Activated T-helper 1 cell treated with anti-CD3 and anti-CD28 coated beads, Interleukin-12 subunit alpha, Interleukin-12 subunit beta, Interleukin-2, Interleukin-4 antibody, amounts not matched to agents 30 ng/mL and 10 ng/mL and 1 ng/mL, durations not matched to agents 14 hours and 24 hours and 36 hours (primary cell): ENCODE measurements at regions of chr18 and their contacts with region 1.

Region 1: DNA sequence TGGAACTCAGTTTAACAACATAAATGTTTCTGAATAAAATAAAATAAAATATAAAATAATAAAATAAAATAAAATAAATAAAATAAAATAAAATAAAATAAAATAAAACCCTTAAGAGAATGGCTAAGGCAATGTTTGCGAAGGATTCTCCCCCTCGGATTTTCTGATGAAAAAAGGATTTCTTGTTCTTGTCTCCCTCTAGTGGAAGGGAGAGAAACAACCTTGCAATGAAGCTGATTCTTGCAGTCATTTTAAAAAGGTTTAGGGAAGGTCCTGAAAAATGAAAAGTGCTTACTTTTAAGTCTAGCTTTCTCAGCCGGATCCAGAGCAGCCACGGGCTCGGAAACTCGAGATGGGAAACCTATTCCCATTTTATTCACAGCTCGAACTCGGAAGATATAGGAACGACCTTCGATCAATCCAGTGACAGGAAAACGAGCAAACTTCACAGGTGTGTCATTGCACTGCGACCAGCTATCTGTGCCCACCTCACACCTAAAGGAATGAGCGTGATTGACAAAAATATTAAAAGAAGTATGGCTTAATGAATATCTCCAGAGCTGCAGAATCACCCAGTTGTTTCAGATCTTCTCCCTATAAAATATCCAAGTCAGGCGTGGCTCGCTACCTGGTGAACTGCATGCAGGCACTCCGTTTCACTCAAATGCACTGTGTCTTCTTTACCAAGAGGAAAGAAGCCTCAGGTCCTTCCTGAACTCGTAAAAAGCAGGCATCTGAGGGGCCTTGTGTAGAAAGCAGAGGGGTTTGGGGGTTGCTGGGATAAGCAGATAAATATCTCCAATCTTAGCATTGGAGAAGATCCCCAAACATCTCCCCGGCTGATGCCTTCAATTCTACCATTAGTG is 68.1 kb downstream of the MYOM1 start:
- DNase-seq: no peak
- H3K4me3 Mint-ChIP-seq: no peak overlapping the region
- H3K27ac Mint-ChIP-seq: no peak overlapping the region
- H3K4me1 Mint-ChIP-seq: peaks cover 7% of the 10 kb centered on the region
- H3K27me3 Mint-ChIP-seq: peaks cover 7% of the 10 kb centered on the region

Region 2: GRCh38 chr18:2932247-2933181 is 219.1 kb before region 1 on chr18:
- intact Hi-C with region 1: loop called (anchors 1 kb)
- DNase-seq: peak; percentile 29
- H3K4me3 Mint-ChIP-seq: no peak overlapping the region
- H3K27ac Mint-ChIP-seq: peak overlapping the region; percentile 82
- H3K4me1 Mint-ChIP-seq: peaks cover 38% of the 10 kb centered on the region
- H3K27me3 Mint-ChIP-seq: no peaks in the 10 kb centered on the region

Region 3: GRCh38 chr18:2994603-2995432 is 156.8 kb before region 1 on chr18:
- intact Hi-C with region 1: loop called (anchors 1 kb)
- DNase-seq: peak; percentile 58
- H3K4me3 Mint-ChIP-seq: peak overlapping the region; percentile 60
- H3K27ac Mint-ChIP-seq: peak overlapping the region; percentile 83
- H3K4me1 Mint-ChIP-seq: peaks cover 82% of the 10 kb centered on the region
- H3K27me3 Mint-ChIP-seq: no peaks in the 10 kb centered on the region

Region 4: DNA sequence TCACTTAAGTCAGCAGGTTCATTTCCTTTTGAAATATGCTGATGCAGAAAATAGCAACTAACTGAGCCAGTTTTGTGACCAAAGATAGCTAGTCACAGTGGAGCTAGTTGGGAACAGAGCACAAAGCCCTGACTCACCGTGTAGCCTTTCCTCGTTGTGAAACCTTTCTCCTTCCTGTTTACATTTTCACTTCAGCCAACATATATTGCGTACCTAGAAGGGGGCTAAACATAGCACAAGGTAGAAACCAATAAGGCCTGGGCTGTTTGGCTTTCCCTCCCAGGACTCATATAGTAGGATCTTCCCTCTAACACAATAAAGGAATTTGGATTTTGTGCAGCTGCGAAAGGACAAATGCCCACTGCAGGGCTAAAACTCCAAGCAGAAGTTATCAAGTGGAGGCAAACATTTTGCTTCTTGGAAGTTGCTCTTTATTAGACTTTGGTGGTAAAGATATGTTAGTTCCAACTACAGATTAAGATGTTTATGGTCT is 114.2 kb before region 1 on chr18:
- intact Hi-C with region 1: no loop called
- DNase-seq: peak; percentile 34
- H3K4me3 Mint-ChIP-seq: peak overlapping the region; percentile 50
- H3K27ac Mint-ChIP-seq: peak overlapping the region; percentile 82
- H3K4me1 Mint-ChIP-seq: peaks cover 33% of the 10 kb centered on the region
- H3K27me3 Mint-ChIP-seq: no peaks in the 10 kb centered on the region

Region 5: DNA sequence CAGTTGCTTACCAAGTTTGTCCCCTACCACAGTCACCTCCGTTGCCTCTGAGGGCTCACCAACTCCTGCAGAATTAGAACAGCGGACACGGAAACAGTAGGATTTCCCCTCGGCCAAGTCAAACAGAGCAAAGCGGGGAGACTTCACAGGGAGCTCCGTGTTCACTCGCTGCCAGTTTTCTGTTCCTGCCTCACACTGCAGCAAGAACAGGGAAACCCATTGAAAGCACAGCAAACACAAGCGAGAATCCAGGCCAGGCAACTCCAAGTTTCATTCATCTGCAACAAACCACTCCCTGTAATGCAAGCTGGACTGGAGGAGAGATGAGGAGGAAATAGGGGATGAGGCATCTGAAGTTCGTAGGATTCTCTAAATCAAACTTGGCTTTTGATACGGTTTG is 16.1 kb before region 1 on chr18:
- intact Hi-C with region 1: no loop called
- DNase-seq: no peak
- H3K4me3 Mint-ChIP-seq: no peak overlapping the region
- H3K27ac Mint-ChIP-seq: no peak overlapping the region
- H3K4me1 Mint-ChIP-seq: no peaks in the 10 kb centered on the region
- H3K27me3 Mint-ChIP-seq: peaks cover 5% of the 10 kb centered on the region